Lower lobe of right lung (tissue), 2 donors: ENCODE measurements at regions of chr3 and their contacts with region 1.

Region 1: DNA sequence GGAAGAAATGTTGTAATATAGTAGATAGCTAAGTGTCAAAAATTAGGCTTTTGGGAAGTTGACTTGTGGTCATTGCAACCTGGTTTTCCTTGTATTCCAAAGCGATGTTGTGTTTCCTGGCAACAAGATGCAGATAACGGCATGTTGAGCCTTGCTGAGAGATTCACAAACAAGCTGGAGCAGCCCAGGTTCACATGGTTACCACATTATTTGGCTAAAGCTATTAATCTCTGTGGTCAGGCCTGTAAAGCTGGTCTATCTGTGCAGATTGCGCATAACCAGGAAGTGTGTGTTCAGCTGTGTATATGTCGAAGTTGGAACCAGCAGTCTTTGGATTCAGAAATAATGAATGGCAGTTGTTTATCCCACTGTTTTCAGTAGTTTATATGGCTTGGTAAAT is 6.6 kb downstream of the TIPARP start:
- DNase-seq: no peak
- ATAC-seq: peak; percentile 88 to 92
- H3K4me3 ChIP-seq: no peak overlapping the region
- H3K27ac ChIP-seq: peak overlapping the region; percentile 68
- H3K4me1 ChIP-seq: peaks cover 96% of the 10 kb centered on the region
- H3K27me3 ChIP-seq: no peaks in the 10 kb centered on the region
- CTCF ChIP-seq: no peak

Region 2: DNA sequence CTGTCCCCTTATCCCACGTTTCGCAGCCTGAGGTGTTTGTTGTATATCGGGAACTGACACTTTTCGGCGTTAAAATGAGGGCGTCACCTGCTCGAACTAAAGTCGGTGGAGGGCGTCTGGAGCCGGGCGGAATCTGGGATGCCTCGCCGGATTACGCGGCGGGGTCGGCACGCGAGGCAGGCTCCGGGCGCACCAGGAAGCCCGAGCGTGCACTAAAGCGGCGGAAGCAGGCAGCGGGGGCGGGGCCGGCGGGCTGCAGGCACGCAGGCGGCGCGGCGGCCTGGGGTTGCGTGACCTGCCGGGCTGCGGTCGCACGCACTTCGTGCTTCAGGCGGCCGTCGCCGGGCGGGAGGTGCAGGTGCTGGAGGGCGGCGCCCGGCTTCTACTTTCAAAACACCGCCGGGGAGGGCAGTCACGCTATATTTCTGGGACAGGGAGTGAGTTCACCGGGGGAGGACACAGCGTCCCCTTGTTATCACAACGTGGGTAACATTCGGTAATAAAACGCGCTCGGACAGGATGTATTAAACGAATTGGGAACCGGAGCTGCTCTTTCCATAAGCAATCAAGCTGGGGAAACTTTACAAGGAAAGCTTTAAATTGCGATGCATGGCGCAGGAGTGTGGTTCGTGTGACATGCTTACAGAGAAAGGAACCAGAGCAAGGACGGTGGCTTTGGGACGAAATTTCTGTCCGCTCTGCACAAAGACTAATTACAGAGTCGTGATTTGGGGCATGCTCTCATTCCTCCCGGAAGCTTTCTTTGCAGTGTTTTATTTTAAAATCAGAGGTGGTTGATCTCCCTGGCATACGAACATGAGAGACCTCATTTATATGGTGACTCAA is 136.0 kb after region 1 on chr3:
- intact Hi-C with region 1: loop called (anchors 10 kb)
- DNase-seq: peak; percentile 94
- ATAC-seq: peak; percentile 96 to 97
- H3K4me3 ChIP-seq: peak overlapping the region; percentile 65
- H3K27ac ChIP-seq: peak overlapping the region; percentile 91
- H3K4me1 ChIP-seq: peaks cover 30% of the 10 kb centered on the region
- H3K27me3 ChIP-seq: no peaks in the 10 kb centered on the region
- CTCF ChIP-seq: no peak